Activated CD4-positive, alpha-beta memory T cell treated with anti-CD3 and anti-CD28 coated beads for 36 hours (primary cell): ENCODE measurements at regions of chr12 and their contacts with region 1.

Region 1: DNA sequence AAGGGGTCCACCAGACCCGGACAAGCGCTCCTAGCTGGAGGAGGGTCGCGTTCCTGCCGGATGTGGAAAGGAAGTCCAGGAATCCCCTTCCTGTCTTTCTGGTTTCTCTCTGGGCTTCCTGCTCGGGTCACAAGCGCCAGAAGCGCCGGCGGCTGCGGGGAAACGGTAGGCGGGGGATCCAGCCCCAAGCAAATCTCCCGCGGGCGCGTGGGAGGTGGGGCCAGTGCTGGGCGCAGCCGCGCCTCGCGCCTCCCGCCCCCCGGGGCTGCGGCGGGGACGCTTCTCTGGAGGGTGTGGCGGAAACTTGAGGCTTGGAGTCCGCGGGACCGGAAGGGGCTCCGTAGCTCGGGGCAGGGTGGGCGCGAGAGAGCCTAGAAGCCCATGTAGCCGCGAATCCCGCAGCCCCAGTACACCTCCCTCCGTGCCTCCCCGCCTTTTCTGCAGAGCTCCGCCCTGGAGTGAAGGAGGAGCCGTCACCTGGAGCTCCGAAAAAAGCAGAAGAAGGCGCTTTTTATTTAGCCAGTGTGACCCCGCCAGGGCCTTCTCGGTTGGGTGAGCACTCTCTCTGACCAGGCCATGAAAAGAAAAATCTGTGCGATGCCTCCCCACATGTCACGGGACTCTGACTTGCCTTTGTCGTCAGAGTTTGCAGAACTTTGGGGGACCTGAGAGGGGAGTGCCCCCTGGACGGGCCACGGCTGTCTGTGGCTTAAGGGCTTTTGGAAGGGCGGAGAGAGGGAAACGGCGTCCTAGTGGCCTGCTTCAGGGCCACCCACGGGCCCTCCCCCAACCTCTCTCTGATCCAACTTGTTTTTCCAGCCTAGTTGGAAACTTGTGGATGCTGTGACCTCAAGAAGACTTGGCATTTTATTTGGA is 21.4 kb upstream of the CLEC2D start:
- DNase-seq: peak; percentile 96
- H3K4me3 Mint-ChIP-seq: peak overlapping the region; percentile 85
- H3K27ac Mint-ChIP-seq: peak overlapping the region; percentile 97
- H3K4me1 Mint-ChIP-seq: peaks cover 53% of the 10 kb centered on the region
- H3K27me3 Mint-ChIP-seq: peaks cover 2% of the 10 kb centered on the region

Region 2: DNA sequence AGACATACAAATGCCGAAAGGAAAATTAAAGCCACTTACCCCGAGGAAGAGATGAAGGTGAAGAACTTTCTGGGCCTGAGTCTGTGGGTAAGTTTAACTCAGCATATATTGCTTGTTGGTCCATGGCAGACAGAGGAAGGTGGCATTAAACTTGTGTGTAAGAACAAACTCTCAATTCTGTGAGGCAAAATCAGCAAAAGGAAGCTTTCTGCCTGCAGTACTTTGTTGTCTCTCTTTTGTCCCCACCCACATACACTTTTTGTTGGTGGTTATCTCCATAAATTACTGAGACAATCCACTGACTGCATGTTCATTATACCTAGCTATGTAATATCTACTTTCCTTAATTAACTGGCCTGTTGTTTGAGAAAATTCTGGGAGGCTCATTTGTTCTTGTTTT is 40.3 kb before region 1 on chr12 and contains the start of gene KLRB1:
- CTCF ChIA-PET with region 1: no interaction called
- POLR2A ChIA-PET with region 1: no interaction called
- intact Hi-C with region 1: no loop called
- DNase-seq: no peak
- H3K4me3 Mint-ChIP-seq: peak within 1 kb of the TSS; percentile 68
- H3K27ac Mint-ChIP-seq: peak within 1 kb of the TSS; percentile 82
- H3K4me1 Mint-ChIP-seq: peaks cover 37% of the 10 kb centered on the region
- H3K27me3 Mint-ChIP-seq: no peaks in the 10 kb centered on the region
- total RNA-seq, gene KLRB1: 3.6 to 4.9 TPM

Region 3: GRCh38 chr12:9702255-9702654 is 54.2 kb after region 1 on chr12:
- CTCF ChIA-PET with region 1: interaction called, 3 read pairs
- POLR2A ChIA-PET with region 1: interaction called, 5 read pairs
- intact Hi-C with region 1: loop called (anchors 1 kb)
- DNase-seq: peak; percentile 78
- H3K4me3 Mint-ChIP-seq: peak overlapping the region; percentile 66
- H3K27ac Mint-ChIP-seq: peak overlapping the region; percentile 87
- H3K4me1 Mint-ChIP-seq: peaks cover 74% of the 10 kb centered on the region
- H3K27me3 Mint-ChIP-seq: no peaks in the 10 kb centered on the region

Region 4: DNA sequence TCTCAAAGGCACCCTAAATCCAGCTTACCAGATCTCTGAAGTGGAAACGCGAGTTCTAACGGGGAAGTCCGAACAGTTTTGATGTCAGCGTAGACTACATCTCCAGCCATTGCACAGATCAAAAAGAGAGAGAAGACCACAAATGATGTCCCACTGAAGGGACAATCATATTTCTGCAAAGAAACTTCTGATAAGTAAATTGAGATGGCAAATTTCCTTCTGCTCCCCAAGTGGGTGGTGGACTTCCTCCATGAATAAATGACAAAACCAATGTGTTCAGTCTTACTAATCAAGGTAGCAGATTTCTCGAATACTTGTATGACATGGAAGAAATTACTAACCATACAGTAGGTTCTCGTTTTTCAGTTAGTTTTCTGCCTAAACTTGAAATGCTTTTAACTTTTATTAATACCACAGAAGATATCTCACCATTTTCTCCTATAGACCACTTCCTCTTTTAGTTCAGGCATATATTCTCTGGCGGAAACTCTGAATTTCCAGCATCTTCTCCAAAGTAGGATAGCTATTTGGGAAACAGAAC is 84.9 kb after region 1 on chr12 and contains the start of gene CLECL1:
- CTCF ChIA-PET with region 1: no interaction called
- POLR2A ChIA-PET with region 1: interaction called, 12 read pairs
- intact Hi-C with region 1: loop called (anchors 2 kb)
- DNase-seq: no peak
- H3K4me3 Mint-ChIP-seq: peak within 1 kb of the TSS; percentile 83
- H3K27ac Mint-ChIP-seq: peak within 1 kb of the TSS; percentile 93
- H3K4me1 Mint-ChIP-seq: peaks cover 50% of the 10 kb centered on the region
- H3K27me3 Mint-ChIP-seq: no peaks in the 10 kb centered on the region
- total RNA-seq, gene CLECL1: 6.5 to 7.4 TPM

Region 5: DNA sequence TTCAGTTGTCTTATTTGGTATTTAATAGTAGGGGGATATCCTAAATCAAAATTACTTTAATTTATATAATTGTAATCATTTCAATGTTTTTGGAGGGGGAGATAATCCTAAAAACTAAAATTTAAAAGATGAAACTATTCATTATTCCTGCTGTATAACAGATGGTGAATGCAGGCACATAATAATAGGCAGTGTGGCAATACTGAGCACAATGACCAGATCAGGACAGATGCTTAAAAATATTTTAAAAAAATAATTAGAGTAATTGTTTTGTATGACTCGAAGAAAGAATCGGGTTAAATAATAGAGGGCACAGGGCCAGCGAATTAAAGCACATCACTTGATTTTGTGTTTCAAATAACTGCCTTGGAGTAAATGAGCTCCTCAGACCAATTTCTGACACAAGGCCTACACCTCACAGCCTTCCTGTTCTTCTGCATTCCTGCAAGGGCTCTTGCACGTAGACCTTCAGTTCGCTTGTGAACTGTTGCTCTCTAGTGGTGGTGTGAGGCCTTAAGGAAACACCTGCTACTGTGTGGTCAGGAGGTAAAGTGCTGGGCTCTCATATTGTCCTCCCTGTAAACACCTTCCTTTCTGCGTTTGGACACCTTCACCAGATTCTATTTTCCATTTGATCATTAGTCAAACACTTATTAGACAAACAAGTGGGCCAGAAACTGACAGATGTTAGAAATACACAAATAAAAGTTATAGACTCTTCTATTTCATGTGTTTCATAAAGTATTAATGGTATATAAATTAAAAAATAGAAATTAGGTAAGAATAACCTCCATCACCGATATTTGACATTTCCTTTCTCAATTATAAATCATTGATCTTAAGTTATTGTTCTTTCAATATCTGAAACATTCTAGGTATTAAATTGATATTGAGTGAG is 149.9 kb after region 1 on chr12:
- CTCF ChIA-PET with region 1: no interaction called
- POLR2A ChIA-PET with region 1: interaction called, 5 read pairs
- intact Hi-C with region 1: loop called (anchors 1 kb)
- DNase-seq: peak; percentile 77
- H3K4me3 Mint-ChIP-seq: no peak overlapping the region
- H3K27ac Mint-ChIP-seq: peak overlapping the region; percentile 54
- H3K4me1 Mint-ChIP-seq: peaks cover 44% of the 10 kb centered on the region
- H3K27me3 Mint-ChIP-seq: no peaks in the 10 kb centered on the region